WTC11 (cell line): ENCODE measurements at regions of chr2 and their contacts with region 1.

Region 1: DNA sequence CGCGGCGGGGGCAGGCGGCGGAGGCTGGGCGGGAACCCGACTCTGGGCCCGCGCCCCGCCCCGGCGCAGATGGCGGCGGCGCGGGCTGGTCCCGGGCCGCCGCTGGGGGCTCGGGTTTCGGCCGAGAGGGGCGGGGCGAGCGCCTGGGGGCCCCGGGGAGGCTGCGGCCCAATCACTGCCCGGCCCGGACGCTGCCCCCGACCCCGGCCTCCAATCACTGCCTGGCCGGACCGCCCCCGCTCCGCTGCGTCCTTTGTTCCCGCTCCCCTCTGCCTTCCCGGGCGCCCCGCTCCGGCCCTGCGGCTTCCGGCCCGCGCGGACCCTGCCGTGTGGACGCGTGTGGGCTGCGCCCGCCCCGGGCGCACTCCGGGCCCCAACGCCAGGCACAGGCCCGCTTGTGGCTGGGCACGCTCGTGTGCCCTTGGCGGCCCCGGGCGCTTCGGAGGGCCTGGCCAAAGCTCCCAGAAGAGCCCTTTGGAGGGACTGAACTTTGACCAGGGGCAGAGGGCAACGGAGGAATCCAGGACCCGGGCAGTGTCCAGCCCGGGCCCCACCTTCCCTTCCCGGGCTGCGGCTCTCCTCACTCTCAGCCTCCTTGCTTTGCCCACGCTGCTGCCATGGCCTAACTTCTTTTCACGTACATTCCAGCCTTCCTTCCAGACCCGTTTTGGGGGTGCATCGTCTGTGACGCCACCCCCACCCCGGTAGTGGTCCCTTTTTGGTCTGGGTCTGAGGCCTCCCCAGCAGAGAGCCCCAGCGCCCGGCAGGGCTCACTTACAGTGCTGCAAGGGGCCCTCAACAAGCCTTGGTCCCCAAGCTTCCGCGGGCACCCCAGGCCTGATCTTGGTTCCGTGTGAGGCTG is 27.1 kb upstream of the PTMA start:
- DNase-seq: peak; percentile 94
- ATAC-seq: peak; percentile 75
- H3K4me3 Mint-ChIP-seq: peak overlapping the region; percentile 86
- H3K27ac Mint-ChIP-seq: peak overlapping the region; percentile 99
- H3K4me1 Mint-ChIP-seq: peaks cover 41% of the 10 kb centered on the region
- H3K27me3 Mint-ChIP-seq: no peaks in the 10 kb centered on the region
- CTCF ChIP-seq: no peak

Region 2: DNA sequence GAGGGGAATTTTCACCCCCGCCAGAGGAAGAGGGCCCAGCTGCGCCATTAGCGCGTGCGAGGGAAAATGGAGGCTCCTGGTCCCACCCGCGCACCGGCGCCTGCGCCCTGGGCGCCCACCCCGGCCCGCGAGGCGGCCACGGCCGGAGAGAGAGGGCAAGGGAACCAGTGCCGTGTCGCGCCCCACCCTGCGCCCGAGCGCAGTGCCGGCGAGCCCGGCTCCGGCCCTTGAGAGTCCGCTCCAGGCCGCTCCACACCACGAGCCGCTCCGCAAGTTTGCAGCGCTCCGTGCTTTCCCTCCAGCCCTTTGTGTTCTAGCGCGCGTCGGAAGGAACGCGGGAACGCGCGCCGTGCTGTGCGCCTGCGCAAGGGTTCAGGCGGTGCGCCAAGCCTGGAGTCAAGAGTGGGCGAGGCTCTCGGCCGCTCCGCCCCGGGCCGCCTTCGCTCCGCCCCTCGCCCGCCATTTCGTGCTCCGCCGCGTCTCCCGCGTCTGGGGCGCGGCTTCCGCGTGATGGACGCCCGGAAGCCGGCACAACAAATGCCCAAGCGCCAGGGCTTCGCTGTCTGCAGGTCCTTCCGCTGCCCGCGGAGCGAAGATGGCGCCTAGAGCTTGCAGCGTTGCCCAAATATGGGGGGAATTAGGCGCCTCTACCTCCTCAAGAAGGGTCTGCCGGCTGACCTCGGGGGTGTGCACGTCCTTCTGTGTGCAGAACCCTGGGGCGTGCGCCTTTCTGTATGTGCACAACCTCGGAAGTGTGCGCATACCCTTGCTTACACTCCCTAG is 19.0 kb before region 1 on chr2:
- CTCF ChIA-PET with region 1: interaction called, 32 read pairs
- POLR2A ChIA-PET with region 1: interaction called, 16 read pairs
- DNase-seq: peak; percentile 98
- ATAC-seq: peak; percentile 67
- H3K4me3 Mint-ChIP-seq: peak overlapping the region; percentile 60
- H3K27ac Mint-ChIP-seq: peak overlapping the region; percentile 94
- H3K4me1 Mint-ChIP-seq: peaks cover 44% of the 10 kb centered on the region
- H3K27me3 Mint-ChIP-seq: peaks cover 20% of the 10 kb centered on the region
- CTCF ChIP-seq: no peak